Panc1 (cell line): ENCODE measurements at regions of chr2 and their contacts with region 1.

Region 1: DNA sequence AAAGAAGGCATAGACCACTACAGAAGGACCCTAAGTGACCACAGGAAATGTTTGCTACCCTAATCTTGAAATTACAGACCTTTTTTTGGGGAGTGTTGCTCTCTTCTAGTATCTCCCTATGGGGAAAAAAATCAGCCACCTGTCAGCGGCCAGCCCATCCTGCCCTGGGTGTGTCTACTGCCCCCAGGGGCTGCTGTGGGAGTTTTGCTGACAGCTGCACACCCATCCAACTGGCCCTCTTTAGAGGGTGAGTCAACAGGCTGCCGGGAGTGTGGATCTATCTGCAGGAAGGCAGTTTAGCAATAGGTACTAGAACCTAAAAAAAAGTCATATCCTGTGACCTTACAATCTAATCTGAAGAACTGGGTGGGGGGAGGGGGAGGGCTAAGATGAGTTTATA is 796 bp upstream of the DYSF start:
- DNase-seq: no peak
- ATAC-seq: no peak
- H3K4me3 ChIP-seq: no peak overlapping the region
- H3K27ac ChIP-seq: no peak overlapping the region
- H3K4me1 ChIP-seq: no peaks in the 10 kb centered on the region; the same call in 1 of the 2 replicates
- H3K27me3 ChIP-seq: no peaks in the 10 kb centered on the region; the same call in 1 of the 2 replicates
- CTCF ChIP-seq: no peak

Region 2: DNA sequence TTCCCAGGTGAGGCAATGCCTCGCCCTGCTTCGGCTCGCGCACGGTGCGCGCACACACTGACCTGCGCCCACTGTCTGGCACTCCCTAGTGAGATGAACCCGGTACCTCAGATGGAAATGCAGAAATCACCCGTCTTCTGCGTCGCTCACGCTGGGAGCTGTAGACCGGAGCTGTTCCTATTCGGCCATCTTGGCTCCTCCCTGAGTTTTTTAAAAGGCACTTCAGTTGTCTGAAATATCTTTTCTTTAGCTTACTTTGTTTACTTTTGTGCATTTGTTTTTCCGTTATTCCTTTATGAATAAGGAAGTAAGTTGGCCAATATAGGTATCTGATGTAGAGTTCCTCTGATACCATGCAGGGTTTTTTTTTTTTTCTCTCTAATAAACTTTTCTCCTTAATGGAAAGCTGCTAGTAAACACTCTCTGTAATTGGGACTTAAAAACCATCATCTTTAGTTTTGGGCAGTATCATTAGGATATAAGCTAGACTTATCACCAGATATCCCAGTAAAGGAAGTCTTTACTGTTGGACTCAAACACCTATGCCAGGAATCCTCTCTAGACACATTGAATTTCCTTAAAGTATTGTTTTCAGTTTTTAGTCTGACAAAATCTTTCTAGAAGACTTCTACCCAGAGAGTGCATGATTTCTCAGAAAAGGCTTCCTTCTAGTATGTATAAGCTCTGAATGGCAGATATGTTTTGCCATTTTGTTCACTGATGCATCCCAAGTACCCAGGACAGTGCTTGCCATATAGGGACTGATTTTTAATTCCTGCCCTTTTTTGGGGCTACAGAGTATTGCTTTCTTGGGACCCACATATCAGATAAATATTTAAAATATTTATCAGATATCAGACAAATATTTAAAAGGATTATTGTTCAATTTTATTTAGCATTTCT is 35.0 kb before region 1 on chr2:
- CTCF ChIA-PET with region 1: no interaction called
- POLR2A ChIA-PET with region 1: interaction called, 11 read pairs
- in situ Hi-C with region 1: no loop called
- intact Hi-C with region 1: no loop called
- DNase-seq: no peak
- ATAC-seq: no peak
- H3K4me3 ChIP-seq: peak overlapping the region; percentile 30 to 32; a peak in 3 of 4 replicates
- H3K27ac ChIP-seq: peak overlapping the region; percentile 87
- H3K4me1 ChIP-seq: peaks cover 4% of the 10 kb centered on the region
- H3K27me3 ChIP-seq: no peaks in the 10 kb centered on the region
- CTCF ChIP-seq: no peak

Region 3: GRCh38 chr2:71423817-71424420 is 28.6 kb before region 1 on chr2:
- CTCF ChIA-PET with region 1: no interaction called
- POLR2A ChIA-PET with region 1: interaction called, 21 read pairs
- in situ Hi-C with region 1: no loop called
- intact Hi-C with region 1: no loop called
- DNase-seq: no peak
- ATAC-seq: no peak
- H3K4me3 ChIP-seq: no peak overlapping the region
- H3K27ac ChIP-seq: no peak overlapping the region
- H3K4me1 ChIP-seq: no peaks in the 10 kb centered on the region; the same call in 1 of the 2 replicates
- H3K27me3 ChIP-seq: no peaks in the 10 kb centered on the region
- CTCF ChIP-seq: no peak